HEK293 (cell line): ENCODE measurements at regions of chr18 and their contacts with region 1.

Region 1: DNA sequence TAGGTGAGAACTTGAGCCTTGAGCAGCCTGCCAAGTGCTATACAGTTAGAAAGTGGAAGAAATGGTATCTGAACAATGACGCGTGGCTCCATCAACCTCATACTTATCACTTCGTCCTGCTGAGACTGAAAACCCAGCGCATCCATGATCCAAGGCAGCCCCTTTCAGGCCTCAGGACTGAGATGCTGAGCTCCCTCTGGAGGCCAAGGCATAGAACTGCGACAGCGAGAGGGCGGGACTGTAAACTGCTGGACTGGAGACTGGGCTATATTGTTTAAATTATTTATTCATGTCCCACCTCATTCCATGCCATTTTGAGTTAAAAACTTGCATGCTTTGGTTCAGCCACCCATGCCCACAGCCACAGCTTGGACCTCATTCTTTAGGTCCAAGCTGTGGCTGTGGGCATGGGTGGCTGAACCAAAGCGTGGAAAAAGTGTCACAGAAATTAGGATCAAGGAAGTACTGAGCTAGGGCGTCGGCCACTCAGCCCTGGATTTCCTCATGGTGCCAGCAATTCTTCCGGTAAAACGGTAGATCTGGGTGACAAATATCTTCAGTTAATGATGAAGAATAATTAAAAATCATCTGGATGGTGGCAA is 195.5 kb downstream of the L3MBTL4 start:
- H3K4me3 ChIP-seq: no peak overlapping the region
- H3K27ac ChIP-seq: no peak overlapping the region
- H3K4me1 ChIP-seq: no peaks in the 10 kb centered on the region
- CTCF ChIP-seq: no peak

Region 2: GRCh38 chr18:6207116-6207515 is 12.1 kb before region 1 on chr18:
- CTCF ChIA-PET with region 1: interaction called, 24 read pairs
- POLR2A ChIA-PET with region 1: no interaction called
- H3K4me3 ChIP-seq: no peak overlapping the region
- H3K27ac ChIP-seq: no peak overlapping the region
- H3K4me1 ChIP-seq: no peaks in the 10 kb centered on the region
- CTCF ChIP-seq: no peak